Posterior vena cava (tissue), 2 donors: ENCODE measurements at regions of chr14 and their contacts with region 1.

Region 1: DNA sequence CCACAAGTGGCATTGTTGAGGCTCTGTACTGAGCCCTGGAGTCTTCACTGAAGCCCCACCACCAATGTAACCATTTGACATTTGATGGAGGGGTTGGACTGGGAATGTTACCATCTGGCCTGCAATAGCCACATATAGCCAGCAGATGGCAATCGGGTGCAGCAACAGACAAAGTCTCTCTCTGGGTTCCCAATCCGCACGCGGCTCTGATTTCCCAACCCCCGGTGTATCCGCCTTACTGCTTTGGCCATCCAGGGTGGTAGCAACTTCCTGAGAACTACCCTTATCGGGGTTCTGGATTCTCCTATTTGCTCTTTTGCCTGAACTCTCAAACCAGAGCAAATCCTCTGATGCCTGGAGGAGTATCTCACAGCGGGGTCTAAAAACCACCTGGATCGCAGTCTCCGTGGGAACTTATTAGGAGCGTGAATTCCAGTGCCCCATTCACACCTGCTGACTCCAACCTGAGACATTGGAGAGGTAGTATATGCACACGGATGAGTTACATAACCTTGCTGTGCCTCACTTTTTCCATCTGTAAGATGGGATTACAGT is 14.2 kb downstream of the VRTN start:
- DNase-seq: peak; percentile 93

Region 2: GRCh38 chr14:74126315-74126714 is 236.1 kb before region 1 on chr14:
- intact Hi-C with region 1: no loop called
- DNase-seq: no peak

Region 3: DNA sequence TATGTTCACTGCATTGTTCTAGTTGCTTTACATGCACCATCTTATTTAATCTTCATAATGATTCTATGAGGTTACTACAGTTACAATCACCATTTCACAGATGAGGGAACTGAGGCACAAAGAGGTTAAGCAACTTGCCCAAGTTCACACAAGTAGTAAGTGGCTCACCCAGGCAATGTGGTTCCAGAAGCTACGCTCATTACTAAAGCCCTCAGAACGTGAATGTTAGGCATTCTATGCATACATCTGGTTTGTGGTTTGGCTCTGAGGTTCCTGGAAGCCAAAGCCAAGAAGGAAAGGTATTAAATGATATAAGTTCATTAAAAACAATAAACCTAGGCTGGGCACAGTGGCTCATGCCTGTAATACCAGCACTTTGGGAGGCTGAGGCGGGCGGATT is 28.5 kb before region 1 on chr14:
- intact Hi-C with region 1: loop called in 1 of 2 experiments (anchors 1 kb)
- DNase-seq: no peak

Region 4: GRCh38 chr14:74425525-74426201 is 63.2 kb after region 1 on chr14:
- intact Hi-C with region 1: no loop called
- DNase-seq: peak; percentile 85

Region 5: DNA sequence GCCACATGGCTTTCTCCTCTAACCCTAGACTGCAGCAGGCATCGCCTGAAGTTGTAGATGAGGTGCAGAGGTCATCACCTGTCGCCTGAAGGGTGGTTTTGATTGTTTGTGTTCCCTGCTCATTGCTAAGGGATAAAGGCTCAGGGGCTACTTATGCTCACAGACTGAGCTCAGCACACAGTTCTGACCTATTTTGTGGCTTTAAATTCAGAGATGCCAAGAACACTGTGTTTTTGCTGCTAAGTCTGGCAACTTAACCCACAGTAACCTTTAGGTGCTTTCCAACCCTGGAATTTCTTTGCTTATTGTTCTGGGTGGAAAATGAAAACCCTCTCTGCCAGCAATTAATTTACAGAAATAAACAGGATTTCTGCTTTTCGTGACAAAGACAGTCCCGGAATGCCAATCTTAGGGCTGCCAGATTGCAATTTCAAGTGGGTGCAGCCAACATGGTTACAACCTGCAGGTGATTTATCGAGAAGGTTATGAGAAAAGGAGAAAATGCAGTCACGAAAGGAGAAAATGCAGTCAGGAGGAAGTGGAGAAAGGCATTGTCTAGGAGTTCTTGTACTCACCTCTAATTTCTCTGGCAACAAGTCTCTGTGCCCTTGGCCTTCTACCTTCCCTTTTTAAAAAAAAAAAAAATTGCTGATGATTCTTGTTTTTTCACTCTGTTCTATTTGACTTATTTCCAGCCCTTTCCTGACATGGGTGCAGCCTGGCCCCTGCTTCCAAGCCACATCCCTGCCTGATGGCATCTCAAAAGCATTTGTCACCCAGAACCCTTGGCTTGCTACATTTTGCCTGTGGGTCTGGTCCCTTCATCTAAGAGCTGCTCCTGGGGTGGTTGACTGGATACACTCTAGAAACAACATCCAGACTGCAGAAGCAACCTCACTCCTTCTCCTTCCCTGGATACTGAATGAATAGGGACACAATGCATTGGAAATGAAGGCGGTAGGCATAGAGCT is 107.4 kb after region 1 on chr14:
- intact Hi-C with region 1: loop called (anchors 5 to 10 kb)
- DNase-seq: no peak

Region 6: DNA sequence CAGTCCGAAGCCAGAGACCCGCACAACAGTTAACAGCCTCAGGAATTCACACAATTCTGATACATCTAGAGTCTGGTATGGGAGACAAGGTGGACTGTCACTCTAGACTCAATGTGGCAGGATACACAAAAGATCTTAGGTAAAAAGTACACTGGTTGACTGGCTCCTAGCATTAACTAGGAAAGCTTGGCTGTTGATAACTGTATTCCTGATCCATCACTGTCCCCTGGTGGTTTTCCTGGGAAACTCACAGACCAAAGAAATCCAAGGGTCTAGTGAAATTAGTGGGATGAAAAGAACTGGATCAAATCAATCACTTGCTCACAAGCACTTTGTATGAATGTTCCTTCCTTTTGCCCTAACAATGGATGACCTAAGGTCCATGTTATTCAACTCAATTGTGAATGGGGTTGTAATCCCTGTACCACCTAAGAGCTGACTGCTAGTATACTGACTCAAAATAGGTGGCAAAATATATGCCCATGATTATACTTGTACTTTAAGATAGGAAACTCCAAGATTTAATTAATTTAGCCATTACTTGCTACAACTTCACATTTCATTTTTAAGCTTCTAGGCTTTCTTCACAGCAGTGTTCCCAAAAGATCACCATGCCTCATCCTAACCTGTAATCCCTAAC is 116.7 kb after region 1 on chr14:
- intact Hi-C with region 1: loop called in 1 of 2 experiments (anchors 5 kb)
- DNase-seq: no peak

Region 7: GRCh38 chr14:75158843-75159614 is 796.6 kb after region 1 on chr14:
- intact Hi-C with region 1: no loop called
- DNase-seq: no peak